Naive thymus-derived CD4-positive, alpha-beta T cell (primary cell): ENCODE measurements at regions of chr15 and their contacts with region 1.

Region 1: GRCh38 chr15:89334510-89335288 is at the start of gene POLG:
- DNase-seq: peak; percentile 92 to 100 (median 99)
- ATAC-seq: peak; percentile 95
- H3K4me3 ChIP-seq: peak within 1 kb of the TSS; percentile 91
- H3K4me3 Mint-ChIP-seq: peak within 1 kb of the TSS; percentile 88 to 98 (median 95)
- H3K27ac ChIP-seq: peak within 1 kb of the TSS; percentile 82
- H3K27ac Mint-ChIP-seq: peak within 1 kb of the TSS; percentile 93 to 100 (median 100)
- H3K4me1 ChIP-seq: peaks cover 44 to 48% of the 10 kb centered on the region in 2 donors
- H3K4me1 Mint-ChIP-seq: peaks cover 28 to 55% (median 51%) of the 10 kb centered on the region in 7 donors
- H3K27me3 ChIP-seq: no peaks in the 10 kb centered on the region
- H3K27me3 Mint-ChIP-seq: peaks cover 0 to 9% (median 4%) of the 10 kb centered on the region in 5 donors
- total RNA-seq, gene POLG: 121 to 136 (median 129) TPM

Region 2: DNA sequence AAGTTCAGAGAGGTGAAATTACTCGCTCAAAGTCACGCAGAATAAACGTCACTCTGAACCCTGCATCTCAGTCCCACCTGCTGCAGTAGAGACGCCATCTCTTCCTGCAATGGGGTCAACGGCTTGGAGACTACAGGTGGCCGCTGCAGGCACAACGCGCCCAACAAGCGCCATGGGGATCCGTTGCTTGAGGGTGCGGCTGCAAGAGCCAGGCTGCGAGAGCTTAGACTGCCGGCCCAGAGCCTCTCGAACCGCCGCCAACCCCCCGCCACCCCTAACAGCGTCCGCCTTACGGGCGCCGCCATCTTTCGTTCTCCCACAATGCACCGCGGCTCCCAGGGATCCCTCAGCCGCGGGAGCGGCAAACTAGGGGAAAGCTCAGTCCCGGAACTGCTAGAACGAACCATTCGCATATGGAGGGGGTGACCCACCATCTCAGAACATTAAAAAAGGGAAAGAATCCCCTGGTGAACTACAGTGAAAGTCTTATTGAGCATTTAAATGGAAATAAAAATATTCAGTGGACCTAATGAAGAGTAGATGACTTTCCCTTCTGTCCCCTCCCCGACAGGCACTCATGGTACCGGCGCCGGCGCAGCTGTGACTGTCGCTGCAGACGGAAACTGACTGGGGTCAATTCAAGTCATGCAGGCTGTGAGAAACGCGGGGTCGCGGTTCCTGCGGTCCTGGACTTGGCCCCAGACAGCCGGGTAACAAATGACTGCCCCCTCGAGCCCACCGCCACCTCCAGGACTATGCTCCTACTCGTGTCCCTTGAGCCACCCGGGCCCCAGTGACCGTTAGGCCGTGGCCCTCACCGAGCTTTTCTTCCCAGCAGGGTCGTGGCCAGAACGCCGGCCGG is 867.4 kb before region 1 on chr15 and contains the starts of genes MRPL46 and MRPS11:
- CTCF ChIA-PET with region 1: no interaction called
- POLR2A ChIA-PET with region 1: no interaction called
- intact Hi-C with region 1: loop called in 1 of 2 experiments (anchors 1 kb)
- DNase-seq: peak; percentile 78 to 94 (median 91)
- ATAC-seq: peak; percentile 97
- H3K4me3 ChIP-seq: peak within 1 kb of the TSS; percentile 75
- H3K4me3 Mint-ChIP-seq: peak within 1 kb of the TSS; percentile 87 to 98 (median 97)
- H3K27ac ChIP-seq: peak within 1 kb of the TSS; percentile 95
- H3K27ac Mint-ChIP-seq: peak within 1 kb of the TSS; percentile 96 to 99 (median 98)
- H3K4me1 ChIP-seq: peaks cover 0 to 19% of the 10 kb centered on the region in 2 donors
- H3K4me1 Mint-ChIP-seq: peaks cover 18 to 42% (median 29%) of the 10 kb centered on the region in 7 donors
- H3K27me3 ChIP-seq: no peaks in the 10 kb centered on the region
- H3K27me3 Mint-ChIP-seq: no peaks in the 10 kb centered on the region
- total RNA-seq, gene MRPL46: 9.2 to 32.1 (median 28.5) TPM
- total RNA-seq, gene MRPS11: 12.8 to 55.7 (median 24.0) TPM

Region 3: DNA sequence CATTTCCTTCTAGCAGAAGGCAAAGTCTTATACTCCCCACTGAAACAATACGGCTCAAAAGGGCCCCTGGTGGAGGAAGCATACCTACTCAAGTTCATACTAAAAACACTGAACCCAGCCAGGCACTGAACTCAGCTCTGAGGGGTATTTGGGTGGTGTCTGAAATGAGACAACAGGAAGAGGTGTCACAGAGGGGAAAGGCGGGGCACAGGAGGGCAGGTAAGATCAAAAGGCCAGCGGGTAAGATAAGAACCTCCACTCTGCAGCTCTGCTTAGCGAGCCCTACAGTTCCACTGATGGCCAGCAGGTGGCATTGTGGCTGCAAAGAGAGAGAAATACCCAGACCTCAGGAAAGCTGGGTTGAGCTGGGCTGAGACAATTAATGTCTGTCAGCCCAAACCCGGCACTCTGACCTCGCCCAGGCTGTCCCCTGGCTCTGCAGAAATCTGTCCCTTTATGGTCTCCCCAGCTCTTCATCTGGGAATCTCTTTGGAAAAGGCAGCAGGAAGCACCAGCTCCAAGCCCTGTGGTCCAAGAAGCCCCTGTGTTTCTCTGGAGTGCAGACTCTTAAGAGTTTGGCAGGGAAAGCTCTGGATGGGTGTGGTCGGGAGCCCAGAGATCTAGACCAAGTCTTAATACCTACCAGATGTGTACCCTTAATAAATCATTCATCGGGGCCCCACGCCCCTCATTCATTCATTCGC is 429.9 kb before region 1 on chr15:
- CTCF ChIA-PET with region 1: interaction called, 5 read pairs
- POLR2A ChIA-PET with region 1: interaction called, 3 read pairs
- intact Hi-C with region 1: loop called in 1 of 2 experiments (anchors 2 kb)
- DNase-seq: peak; percentile 79 to 99 (median 98)
- ATAC-seq: peak; percentile 99
- H3K4me3 ChIP-seq: no peak overlapping the region
- H3K4me3 Mint-ChIP-seq: peak overlapping the region; percentile 16 to 78 (median 54)
- H3K27ac ChIP-seq: peak overlapping the region; percentile 70
- H3K27ac Mint-ChIP-seq: peak overlapping the region; percentile 76 to 98 (median 94)
- H3K4me1 ChIP-seq: peaks cover 19 to 37% of the 10 kb centered on the region in 2 donors
- H3K4me1 Mint-ChIP-seq: peaks cover 23 to 65% (median 52%) of the 10 kb centered on the region in 7 donors
- H3K27me3 ChIP-seq: no peaks in the 10 kb centered on the region
- H3K27me3 Mint-ChIP-seq: no peaks in the 10 kb centered on the region

Region 4: GRCh38 chr15:89206908-89207331 is 127.8 kb before region 1 on chr15:
- CTCF ChIA-PET with region 1: no interaction called
- POLR2A ChIA-PET with region 1: no interaction called
- intact Hi-C with region 1: loop called (anchors 2 to 10 kb)
- DNase-seq: peak; percentile 38 to 82 (median 61)
- ATAC-seq: peak; percentile 88
- H3K4me3 ChIP-seq: peak overlapping the region; percentile 24
- H3K4me3 Mint-ChIP-seq: peak overlapping the region in 2 of 10 donors; percentile 20 to 59
- H3K27ac ChIP-seq: no peak overlapping the region
- H3K27ac Mint-ChIP-seq: peak overlapping the region in 1 of 9 donors; percentile 28
- H3K4me1 ChIP-seq: peaks cover 0 to 11% of the 10 kb centered on the region in 2 donors
- H3K4me1 Mint-ChIP-seq: peaks cover 7 to 37% (median 27%) of the 10 kb centered on the region in 7 donors
- H3K27me3 ChIP-seq: no peaks in the 10 kb centered on the region
- H3K27me3 Mint-ChIP-seq: peaks cover 0 to 7% (median 0%) of the 10 kb centered on the region in 5 donors

Region 5: DNA sequence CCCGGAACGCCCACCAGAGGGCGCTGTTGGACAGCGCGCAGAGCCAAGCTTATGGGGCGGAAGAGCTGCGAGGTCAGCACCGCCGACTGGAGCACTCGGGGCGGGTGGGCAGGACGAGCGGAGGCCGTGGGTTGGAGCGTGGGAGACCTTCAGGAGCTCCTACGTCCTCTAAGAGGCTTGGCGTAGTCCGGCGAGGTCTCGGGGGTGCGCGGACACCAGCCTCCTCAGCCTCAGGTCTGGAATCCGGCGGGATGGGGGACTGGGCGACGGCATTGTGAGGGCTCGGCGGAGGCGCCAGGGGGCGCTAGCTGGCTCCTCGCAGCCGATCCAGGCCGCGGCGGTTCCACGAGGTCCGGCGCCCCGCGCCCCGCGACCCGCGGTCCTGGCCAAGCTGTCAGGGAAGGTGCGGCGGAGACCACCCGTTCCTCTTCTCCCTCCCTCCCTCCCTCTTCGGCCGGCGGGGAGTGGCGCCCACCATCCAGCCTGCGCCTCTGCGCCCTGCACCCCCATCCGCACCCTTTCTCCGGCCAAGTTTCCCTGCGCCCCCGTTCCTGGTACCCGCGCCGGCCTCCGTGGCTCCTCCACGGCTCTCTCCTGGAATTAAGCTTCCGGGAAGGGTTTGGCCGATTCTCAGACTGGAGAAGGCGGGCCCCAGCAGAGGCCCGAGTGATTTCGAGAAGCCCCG is 24.2 kb after region 1 on chr15:
- CTCF ChIA-PET with region 1: interaction called, 5 read pairs
- POLR2A ChIA-PET with region 1: no interaction called
- intact Hi-C with region 1: loop called (anchors 1 kb)
- DNase-seq: peak; percentile 61 to 89 (median 80)
- ATAC-seq: peak; percentile 96
- H3K4me3 ChIP-seq: peak overlapping the region; percentile 57
- H3K4me3 Mint-ChIP-seq: peak overlapping the region; percentile 70 to 90 (median 80)
- H3K27ac ChIP-seq: no peak overlapping the region
- H3K27ac Mint-ChIP-seq: peak overlapping the region in 1 of 9 donors; percentile 43
- H3K4me1 ChIP-seq: peaks cover 4 to 10% of the 10 kb centered on the region in 2 donors
- H3K4me1 Mint-ChIP-seq: peaks cover 0 to 23% (median 16%) of the 10 kb centered on the region in 7 donors
- H3K27me3 ChIP-seq: peaks cover 8 to 33% of the 10 kb centered on the region in 2 donors
- H3K27me3 Mint-ChIP-seq: peaks cover 61 to 83% (median 72%) of the 10 kb centered on the region in 5 donors

Region 6: GRCh38 chr15:89575146-89575655 is 240.5 kb after region 1 on chr15 and contains the start of gene TICRR:
- CTCF ChIA-PET with region 1: no interaction called
- POLR2A ChIA-PET with region 1: no interaction called
- intact Hi-C with region 1: loop called (anchors 1 to 2 kb)
- DNase-seq: peak; percentile 69 to 98 (median 97)
- ATAC-seq: peak; percentile 99
- H3K4me3 ChIP-seq: peak within 1 kb of the TSS; percentile 86
- H3K4me3 Mint-ChIP-seq: peak within 1 kb of the TSS; percentile 77 to 96 (median 86)
- H3K27ac ChIP-seq: peak within 1 kb of the TSS; percentile 34
- H3K27ac Mint-ChIP-seq: peak within 1 kb of the TSS; percentile 52 to 87 (median 74)
- H3K4me1 ChIP-seq: no peaks in the 10 kb centered on the region
- H3K4me1 Mint-ChIP-seq: peaks cover 0 to 38% (median 8%) of the 10 kb centered on the region in 7 donors
- H3K27me3 ChIP-seq: no peaks in the 10 kb centered on the region
- H3K27me3 Mint-ChIP-seq: peaks cover 9 to 25% (median 13%) of the 10 kb centered on the region in 5 donors
- total RNA-seq, gene TICRR: 0.11 to 15.5 (median 0.19) TPM

Region 7: GRCh38 chr15:90101969-90102890 is 767.5 kb after region 1 on chr15 and contains the start of gene IDH2:
- CTCF ChIA-PET with region 1: no interaction called
- POLR2A ChIA-PET with region 1: no interaction called
- intact Hi-C with region 1: loop called in 1 of 2 experiments (anchors 5 kb)
- DNase-seq: peak; percentile 60 to 86 (median 74)
- ATAC-seq: peak; percentile 89
- H3K4me3 ChIP-seq: peak within 1 kb of the TSS; percentile 78
- H3K4me3 Mint-ChIP-seq: peak within 1 kb of the TSS; percentile 82 to 97 (median 92)
- H3K27ac ChIP-seq: peak within 1 kb of the TSS; percentile 90
- H3K27ac Mint-ChIP-seq: peak within 1 kb of the TSS; percentile 94 to 99 (median 98)
- H3K4me1 ChIP-seq: peaks cover 38 to 44% of the 10 kb centered on the region in 2 donors
- H3K4me1 Mint-ChIP-seq: peaks cover 43 to 60% (median 52%) of the 10 kb centered on the region in 7 donors
- H3K27me3 ChIP-seq: no peaks in the 10 kb centered on the region
- H3K27me3 Mint-ChIP-seq: peaks cover 0 to 24% (median 0%) of the 10 kb centered on the region in 5 donors
- total RNA-seq, gene IDH2: 32.4 to 230 (median 33.7) TPM